Head of caudate nucleus (tissue), 42 donors: ENCODE measurements at regions of chr1 and their contacts with region 1.

Region 1: DNA sequence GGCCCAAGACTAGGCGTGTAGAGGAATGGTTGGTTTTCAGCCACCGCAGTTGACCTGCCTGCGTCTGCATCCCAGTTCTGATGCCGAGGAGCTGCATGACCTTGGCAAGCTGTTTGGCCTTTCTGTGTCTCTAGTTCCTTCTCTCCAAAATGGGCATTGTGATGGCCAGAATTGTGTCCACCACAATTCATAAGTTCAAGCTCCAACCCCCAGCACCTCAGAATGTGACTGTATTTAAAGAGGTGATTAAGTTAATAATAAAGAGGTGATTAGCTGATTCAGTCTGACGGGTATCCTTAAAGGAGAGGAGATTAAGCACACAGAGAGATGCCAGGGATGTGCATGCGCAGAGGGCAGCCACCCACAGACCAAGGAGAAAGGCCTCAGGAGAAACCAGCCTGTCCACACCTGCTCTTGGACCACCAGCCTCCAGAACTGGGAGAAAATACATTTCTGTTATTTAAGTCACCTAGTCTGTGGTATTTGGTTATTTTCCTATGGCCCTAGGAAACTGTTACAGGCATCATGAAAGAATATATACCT is 28.5 kb downstream of the MAB21L3 start:
- DNase-seq: no peak

Region 2: DNA sequence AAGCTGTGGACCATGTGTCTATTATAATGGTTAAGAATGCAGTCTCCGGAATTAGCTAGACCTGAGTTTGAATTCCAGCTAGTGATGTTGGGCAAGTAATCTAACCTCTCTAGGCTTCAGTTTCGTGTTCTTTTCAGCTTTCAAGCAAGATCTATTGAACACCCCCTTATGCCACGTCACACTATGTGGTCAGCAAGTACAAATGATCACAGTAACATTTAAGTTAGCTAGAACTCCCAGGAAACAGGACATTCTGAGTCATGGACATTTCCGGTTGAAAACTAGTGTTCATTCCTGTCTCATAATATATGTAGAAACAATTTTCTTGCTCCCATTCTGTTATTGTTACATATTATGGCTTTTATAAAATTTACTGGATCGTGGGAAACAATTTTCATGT is 264.8 kb before region 1 on chr1:
- intact Hi-C with region 1: no loop called
- DNase-seq: no peak

Region 3: DNA sequence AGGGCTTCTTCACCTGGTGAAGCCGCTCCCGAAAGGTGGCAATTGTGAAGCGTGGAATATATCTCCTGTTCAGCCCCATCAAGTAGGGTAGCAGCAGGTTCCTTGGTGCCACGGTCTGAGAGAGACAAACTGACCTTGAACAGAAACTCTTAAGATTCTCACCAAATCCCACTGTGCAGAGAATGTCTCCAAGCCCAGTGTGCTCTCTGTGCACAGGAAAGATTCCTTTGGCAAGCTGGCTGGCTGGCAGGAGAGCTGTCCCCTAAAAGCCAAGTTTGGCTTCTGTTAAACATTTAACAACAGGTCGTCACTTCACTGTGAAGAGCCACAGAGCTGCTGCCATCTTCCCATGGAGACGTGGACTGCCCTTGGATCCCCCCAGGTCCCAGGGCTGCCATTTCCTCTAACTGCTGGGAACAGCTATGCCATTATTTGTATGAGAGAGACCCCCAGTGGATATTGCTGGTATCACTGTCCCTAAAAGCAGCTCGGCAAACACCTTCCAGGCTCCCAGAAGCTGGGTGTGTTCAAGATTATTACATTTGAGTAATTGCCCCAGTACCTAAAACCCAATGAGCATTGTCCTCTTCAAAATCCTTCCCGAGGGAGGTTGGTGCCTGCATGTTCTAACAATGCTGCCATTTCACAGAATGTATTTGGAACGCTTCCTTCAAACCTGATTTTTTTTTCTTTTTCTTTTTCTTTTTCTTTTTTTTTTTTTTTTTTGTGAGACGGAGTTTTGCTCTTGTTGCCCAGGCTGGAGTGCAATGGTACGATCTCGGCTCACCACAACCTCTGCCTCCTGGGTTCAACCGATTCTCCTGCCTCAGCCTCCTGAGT is 359.3 kb after region 1 on chr1:
- intact Hi-C with region 1: loop called (anchors 2 kb)
- DNase-seq: peak in 40 of 42 donors; percentile 31 to 89 (median 72)